Panc1 (cell line): ENCODE measurements at regions of chr2 and their contacts with region 1.

Region 1: DNA sequence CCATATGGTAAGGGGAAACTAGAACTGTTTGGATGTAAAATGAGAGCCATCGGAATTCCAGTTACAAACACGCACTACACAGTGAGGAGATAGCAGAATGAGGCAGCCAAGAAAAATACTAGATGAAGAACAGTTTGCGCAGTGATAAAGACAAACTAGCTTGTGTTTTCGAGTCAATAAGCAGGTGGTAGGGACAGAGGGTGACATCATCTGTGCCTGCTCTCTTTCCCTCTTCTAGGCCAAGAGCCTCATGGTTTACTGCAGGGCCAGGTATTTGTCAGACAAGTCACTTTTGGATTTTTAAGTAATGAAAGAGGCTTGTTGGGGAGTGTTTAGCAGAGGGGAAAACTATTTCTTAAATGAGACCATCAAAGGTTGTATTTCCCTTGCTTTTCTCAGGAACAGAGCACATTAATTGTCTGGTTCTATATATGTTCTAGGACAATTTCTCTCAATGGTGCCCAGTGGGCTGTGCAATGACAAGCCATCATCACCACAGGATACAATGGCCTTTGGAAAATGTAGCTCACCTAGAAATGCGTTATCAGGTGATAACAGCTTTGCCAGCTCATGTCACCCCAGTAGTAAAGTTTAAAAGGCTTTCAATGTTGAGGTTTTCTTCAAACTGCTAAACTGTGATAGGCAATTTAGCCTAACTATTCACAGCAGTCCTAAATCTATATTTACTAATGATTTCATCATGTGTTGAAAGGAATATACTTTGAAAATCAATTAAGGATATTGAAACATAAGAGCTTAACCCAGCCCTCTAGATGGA is 1210.3 kb upstream of the ZEB2 start:
- DNase-seq: no peak
- ATAC-seq: no peak
- H3K4me3 ChIP-seq: no peak overlapping the region
- H3K27ac ChIP-seq: no peak overlapping the region
- H3K4me1 ChIP-seq: no peaks in the 10 kb centered on the region
- H3K27me3 ChIP-seq: no peaks in the 10 kb centered on the region
- CTCF ChIP-seq: no peak

Region 2: GRCh38 chr2:145007093-145007959 is 722.9 kb before region 1 on chr2:
- CTCF ChIA-PET with region 1: no interaction called
- POLR2A ChIA-PET with region 1: interaction called, 11 read pairs
- in situ Hi-C with region 1: no loop called
- intact Hi-C with region 1: no loop called
- DNase-seq: no peak
- ATAC-seq: no peak
- H3K4me3 ChIP-seq: no peak overlapping the region
- H3K27ac ChIP-seq: no peak overlapping the region
- H3K4me1 ChIP-seq: no peaks in the 10 kb centered on the region
- H3K27me3 ChIP-seq: no peaks in the 10 kb centered on the region
- CTCF ChIP-seq: no peak